Gastrocnemius medialis (tissue), 4 donors: ENCODE measurements at regions of chr3 and their contacts with region 1.

Region 1: DNA sequence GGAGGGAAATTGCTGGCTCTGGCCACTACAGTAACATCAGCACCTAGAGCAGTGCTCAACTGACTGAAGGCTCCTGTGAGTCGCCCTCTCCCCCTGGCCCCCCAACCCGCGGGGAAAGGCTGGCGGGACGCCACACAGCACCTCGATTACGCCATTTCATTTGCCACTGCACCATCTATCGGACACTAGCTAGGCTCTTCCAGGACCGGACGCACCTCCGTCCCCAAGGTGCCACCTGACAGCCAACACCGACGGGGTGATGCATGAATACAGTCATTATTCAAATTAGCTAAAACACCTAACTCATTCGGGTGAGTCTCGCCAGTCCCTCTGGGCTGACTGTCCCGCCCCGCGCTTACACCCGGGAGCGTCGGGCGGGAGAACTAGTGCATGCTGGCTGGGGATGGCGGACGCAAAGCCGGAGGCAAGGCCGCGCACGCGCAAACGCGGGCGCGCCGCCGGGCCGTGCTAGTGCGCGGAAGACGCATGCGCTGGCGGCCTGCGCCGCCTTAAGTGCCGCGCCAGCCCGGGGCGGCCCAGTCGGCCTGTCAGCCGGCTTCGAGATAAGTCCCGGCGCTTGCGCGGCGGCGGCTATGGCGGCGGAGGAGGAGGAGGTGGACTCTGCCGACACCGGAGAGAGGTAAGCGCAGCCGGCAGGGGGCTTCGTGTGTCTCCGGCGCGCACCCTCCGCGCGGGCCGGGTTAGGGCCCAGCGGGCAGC is at the start of gene ABHD5:
- DNase-seq: peak; percentile 68 to 85
- ATAC-seq: peak; percentile 91
- H3K4me3 ChIP-seq: peak within 1 kb of the TSS; percentile 66 to 93 (median 76)
- H3K27ac ChIP-seq: peak within 1 kb of the TSS; percentile 82 to 95 (median 90)
- H3K4me1 ChIP-seq: peaks cover 23 to 28% of the 10 kb centered on the region in 2 donors
- H3K27me3 ChIP-seq: no peaks in the 10 kb centered on the region
- CTCF ChIP-seq: peak in 4 of 5 experiments; percentile 5 to 29 (median 19)
- POLR2A ChIP-seq: peak; percentile 98
- total RNA-seq, gene ABHD5: 18.6 to 43.7 (median 33.7) TPM

Region 2: DNA sequence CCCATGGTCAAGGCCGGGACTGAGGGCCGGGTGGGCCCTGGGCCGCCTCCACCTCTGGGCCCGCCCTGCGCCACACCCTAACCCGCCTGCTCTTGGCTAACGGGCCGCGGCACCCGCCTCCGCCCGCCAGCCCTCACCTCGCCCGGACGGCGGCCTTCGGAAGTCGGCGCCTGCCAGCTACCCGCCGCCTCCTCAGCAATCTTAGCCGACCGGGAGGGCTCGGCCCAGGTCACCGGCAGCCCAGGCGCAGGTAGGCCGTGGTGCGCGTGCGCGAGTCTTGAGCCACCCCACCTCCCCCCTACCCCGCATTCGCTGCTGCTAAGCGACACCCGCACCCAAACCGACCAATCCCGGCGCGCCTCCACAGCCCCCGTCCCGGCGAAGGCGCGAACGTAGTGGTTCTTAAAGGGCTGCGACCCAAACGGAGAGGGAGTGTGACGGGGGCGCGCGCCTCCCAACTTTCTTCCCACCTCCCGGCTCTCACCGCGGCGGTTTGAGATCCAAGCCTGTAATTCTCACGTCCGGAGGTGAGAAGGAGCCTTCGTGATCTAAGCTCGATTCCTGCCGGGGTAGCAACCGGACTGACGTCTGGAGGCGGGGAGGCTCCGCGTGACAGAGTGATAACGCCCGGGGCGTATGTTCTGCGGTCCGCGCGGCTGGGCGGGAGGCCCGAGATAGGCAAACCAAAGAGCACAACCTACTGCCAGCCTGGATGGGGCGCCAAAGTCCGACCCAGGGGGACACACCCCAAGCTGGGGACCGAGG is 1108.7 kb before region 1 on chr3 and contains the start of gene SEC22C:
- in situ Hi-C with region 1: no loop called
- intact Hi-C with region 1: loop called (anchors 10 kb)
- DNase-seq: peak; percentile 96 to 97
- ATAC-seq: peak; percentile 96 to 98
- H3K4me3 ChIP-seq: peak within 1 kb of the TSS; percentile 71 to 82 (median 75)
- H3K27ac ChIP-seq: peak within 1 kb of the TSS; percentile 87 to 94 (median 92)
- H3K4me1 ChIP-seq: peaks cover 11 to 19% of the 10 kb centered on the region in 2 donors
- H3K27me3 ChIP-seq: no peaks in the 10 kb centered on the region
- CTCF ChIP-seq: peak in 3 of 5 experiments; percentile 15 to 43 (median 38)
- POLR2A ChIP-seq: peak; percentile 91 to 98
- total RNA-seq, gene SEC22C: 35.5 to 54.6 (median 40.6) TPM

Region 3: GRCh38 chr3:43707998-43708397 is 17.4 kb after region 1 on chr3:
- in situ Hi-C with region 1: no loop called
- intact Hi-C with region 1: loop called (anchors 1 kb)
- DNase-seq: no peak
- ATAC-seq: peak in 1 of 2 donors; percentile 37
- H3K4me3 ChIP-seq: no peak overlapping the region
- H3K27ac ChIP-seq: peak overlapping the region in 2 of 4 donors; percentile 3 to 38
- H3K4me1 ChIP-seq: peaks cover 0 to 4% of the 10 kb centered on the region in 2 donors
- H3K27me3 ChIP-seq: no peaks in the 10 kb centered on the region
- CTCF ChIP-seq: no peak
- POLR2A ChIP-seq: no peak